Dorsolateral prefrontal cortex (tissue), 120 donors: ENCODE measurements at regions of chr15 and their contacts with region 1.

Region 1: GRCh38 chr15:85100186-85100937 is 118.7 kb downstream of the PDE8A start:
- DNase-seq: no peak
- H3K4me3 ChIP-seq: no peak overlapping the region
- H3K27ac ChIP-seq: peak overlapping the region in 58 of 59 donors; percentile 40 to 100 (median 89)
- H3K27me3 ChIP-seq: no peaks in the 10 kb centered on the region
- CTCF ChIP-seq: no peak

Region 2: GRCh38 chr15:84588053-84588874 is 512.1 kb before region 1 on chr15:
- intact Hi-C with region 1: loop called in 1 of 2 experiments (anchors 10 kb)
- DNase-seq: peak; percentile 59 to 88 (median 76)
- H3K4me3 ChIP-seq: peak overlapping the region; percentile 9 to 67 (median 50)
- H3K27ac ChIP-seq: no peak overlapping the region
- H3K27me3 ChIP-seq: no peaks in the 10 kb centered on the region
- CTCF ChIP-seq: peak in 55 of 56 donors; percentile 66 to 97 (median 87)

Region 3: GRCh38 chr15:84761607-84762131 is 338.7 kb before region 1 on chr15:
- intact Hi-C with region 1: no loop called
- DNase-seq: no peak
- H3K4me3 ChIP-seq: no peak overlapping the region
- H3K27ac ChIP-seq: peak overlapping the region in 3 of 59 donors; percentile 18 to 43 (median 27)
- H3K27me3 ChIP-seq: no peaks in the 10 kb centered on the region
- CTCF ChIP-seq: no peak

Region 4: DNA sequence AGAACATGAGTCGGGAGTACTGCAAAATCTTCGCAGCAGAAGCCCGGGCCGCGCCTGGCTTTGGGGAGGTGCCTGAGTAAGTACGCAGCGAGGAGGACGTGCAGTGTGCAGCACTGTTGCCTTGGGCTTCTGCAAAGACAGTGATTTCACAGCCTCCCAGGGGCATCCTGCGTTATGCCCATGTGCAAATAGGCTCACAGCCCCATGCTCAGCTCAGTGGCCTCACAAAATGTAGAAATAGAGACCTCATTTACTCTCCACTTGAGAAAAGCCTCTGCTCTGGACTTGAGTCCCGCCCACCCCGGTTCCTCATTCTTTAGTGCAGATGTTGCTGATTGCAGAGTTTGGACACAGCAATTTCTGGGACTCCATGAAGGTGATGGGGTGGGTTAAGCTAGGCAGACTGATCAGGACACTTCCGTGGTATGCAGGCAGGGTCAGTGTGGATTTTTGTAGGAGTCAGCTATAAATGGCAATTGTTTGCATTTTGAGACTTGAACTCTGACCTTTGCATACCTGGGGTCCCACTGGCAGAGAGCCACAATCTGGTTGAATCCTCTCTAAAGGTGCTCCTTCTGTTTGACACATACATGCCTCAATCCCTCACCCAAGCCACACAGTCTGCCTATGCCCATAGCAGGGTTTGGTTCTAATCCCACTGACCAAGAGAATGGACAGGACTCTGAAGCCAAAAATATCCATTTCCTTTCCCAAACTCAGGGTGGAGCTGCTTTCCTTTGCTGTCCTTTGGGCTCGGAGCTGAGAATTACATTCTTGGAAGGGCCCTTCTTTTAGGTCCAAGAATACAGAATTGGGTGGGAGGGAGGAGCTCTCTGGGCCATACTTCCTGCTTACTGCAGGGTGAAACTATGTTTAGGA is 236.6 kb before region 1 on chr15:
- intact Hi-C with region 1: loop called in 1 of 2 experiments (anchors 10 kb)
- DNase-seq: no peak
- H3K4me3 ChIP-seq: no peak overlapping the region
- H3K27ac ChIP-seq: no peak overlapping the region
- H3K27me3 ChIP-seq: no peaks in the 10 kb centered on the region
- CTCF ChIP-seq: peak in 29 of 56 donors; percentile 11 to 52 (median 23)

Region 5: GRCh38 chr15:85044251-85044853 is 56.0 kb before region 1 on chr15:
- intact Hi-C with region 1: no loop called
- DNase-seq: peak in 9 of 10 donors; percentile 35 to 89 (median 72)
- H3K4me3 ChIP-seq: no peak overlapping the region
- H3K27ac ChIP-seq: peak overlapping the region; percentile 10 to 95 (median 87)
- H3K27me3 ChIP-seq: no peaks in the 10 kb centered on the region
- CTCF ChIP-seq: peak in 55 of 56 donors; percentile 42 to 90 (median 77)

Region 6: DNA sequence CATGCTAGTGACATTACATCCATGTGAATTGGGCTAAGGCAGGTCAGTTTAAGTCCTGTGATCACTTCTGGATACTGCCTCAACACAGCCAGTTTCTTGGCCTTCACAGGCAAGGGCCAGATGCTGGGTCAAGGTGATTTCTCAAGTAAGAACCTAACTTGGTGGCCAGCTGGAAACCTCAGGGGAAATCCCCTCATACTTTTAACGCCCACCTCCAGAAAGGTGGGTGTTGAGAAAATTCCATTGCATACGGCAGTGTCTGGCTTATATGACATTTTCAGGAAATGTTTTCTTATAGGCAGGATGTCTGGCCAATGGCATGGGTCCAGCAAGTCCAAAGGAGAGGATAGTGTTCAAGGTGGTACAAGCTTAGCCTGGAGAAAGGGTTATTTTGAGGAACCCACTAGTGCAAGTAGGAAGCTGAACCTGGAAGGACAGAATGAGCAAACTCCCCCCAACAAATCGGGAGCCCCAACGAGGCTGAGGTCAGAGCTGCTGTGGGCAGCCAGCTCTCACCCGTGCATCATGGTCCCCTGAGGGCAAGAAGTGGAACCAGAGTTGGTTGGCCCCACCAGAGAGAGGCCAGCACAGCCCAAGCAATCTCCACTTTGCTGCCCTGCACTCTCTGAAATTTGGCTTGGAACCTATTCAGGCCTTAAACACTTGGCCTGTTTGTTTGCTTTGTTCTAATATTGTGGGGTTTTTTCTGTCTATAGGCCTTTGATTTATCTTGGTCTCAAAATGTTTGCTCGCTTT is 16.7 kb after region 1 on chr15:
- intact Hi-C with region 1: loop called in 1 of 2 experiments (anchors 2 kb)
- DNase-seq: no peak
- H3K4me3 ChIP-seq: no peak overlapping the region
- H3K27ac ChIP-seq: peak overlapping the region in 58 of 59 donors; percentile 6 to 100 (median 96)
- H3K27me3 ChIP-seq: no peaks in the 10 kb centered on the region
- CTCF ChIP-seq: no peak

Region 7: GRCh38 chr15:85821545-85821944 is 721.2 kb after region 1 on chr15:
- intact Hi-C with region 1: no loop called
- DNase-seq: no peak
- H3K4me3 ChIP-seq: no peak overlapping the region
- H3K27ac ChIP-seq: no peak overlapping the region
- H3K27me3 ChIP-seq: no peaks in the 10 kb centered on the region
- CTCF ChIP-seq: no peak